ENCODE measurements at regions of chr2 and their contacts with region 1.

Region 1: DNA sequence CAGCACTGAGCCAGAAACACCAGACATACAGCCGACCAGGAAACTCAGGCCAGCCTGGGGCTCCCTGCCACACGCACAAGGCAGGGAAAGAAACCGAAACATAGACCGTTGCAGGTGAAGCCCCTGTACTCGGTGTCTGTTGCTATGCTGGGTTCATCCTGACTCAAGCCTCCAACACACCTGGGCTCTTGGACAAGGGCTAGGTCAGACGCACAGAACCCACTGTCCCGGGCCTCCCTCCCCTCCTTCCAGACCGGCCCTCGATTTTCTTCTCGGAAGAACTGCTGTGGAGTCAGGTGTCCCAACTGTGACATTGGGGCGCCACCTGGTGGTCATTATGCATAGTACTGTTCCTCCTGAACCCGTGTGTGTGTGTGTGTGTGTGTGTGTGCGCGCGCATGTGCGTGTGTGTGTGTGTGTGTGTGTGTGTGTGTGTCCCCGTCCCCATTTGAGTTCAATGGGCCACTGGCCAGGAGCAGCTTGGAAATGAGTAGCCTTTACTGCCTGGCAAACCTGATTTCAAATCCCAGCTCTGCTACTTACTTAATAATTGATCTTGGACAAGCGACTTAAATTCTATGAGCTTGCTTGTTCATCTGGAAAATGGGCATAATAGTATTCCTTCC is 55.4 kb upstream of the GLI2 start:
- DNase-seq: peak; percentile 75
- ATAC-seq: peak; percentile 70
- H3K4me3 ChIP-seq: peak overlapping the region in 1 of 5 experiments; percentile 33
- H3K4me3 Mint-ChIP-seq: no peak overlapping the region
- H3K27ac ChIP-seq: no peak overlapping the region
- H3K27ac Mint-ChIP-seq: no peak overlapping the region
- H3K4me1 ChIP-seq: peaks cover 3% of the 10 kb centered on the region in 2 donors
- H3K4me1 Mint-ChIP-seq: peaks cover 2% of the 10 kb centered on the region
- H3K27me3 ChIP-seq: peaks cover 0 to 12% (median 0%) of the 10 kb centered on the region in 4 experiments
- H3K27me3 Mint-ChIP-seq: peaks cover 53% of the 10 kb centered on the region
- CTCF ChIP-seq: peak; percentile 42

Region 2: GRCh38 chr2:119407430-119408220 is 1272.6 kb before region 1 on chr2:
- CTCF ChIA-PET with region 1: no interaction called
- POLR2A ChIA-PET with region 1: no interaction called
- intact Hi-C with region 1: loop called (anchors 5 kb)
- DNase-seq: peak; percentile 67
- ATAC-seq: peak; percentile 60
- H3K4me3 ChIP-seq: no peak overlapping the region
- H3K4me3 Mint-ChIP-seq: no peak overlapping the region
- H3K27ac ChIP-seq: no peak overlapping the region
- H3K27ac Mint-ChIP-seq: no peak overlapping the region
- H3K4me1 ChIP-seq: no peaks in the 10 kb centered on the region
- H3K4me1 Mint-ChIP-seq: no peaks in the 10 kb centered on the region
- H3K27me3 ChIP-seq: peaks cover 0 to 3% (median 0%) of the 10 kb centered on the region in 4 experiments
- H3K27me3 Mint-ChIP-seq: peaks cover 15% of the 10 kb centered on the region
- CTCF ChIP-seq: peak; percentile 81

Region 3: GRCh38 chr2:119641562-119642258 is 1038.5 kb before region 1 on chr2:
- CTCF ChIA-PET with region 1: interaction called, 10 read pairs
- POLR2A ChIA-PET with region 1: no interaction called
- intact Hi-C with region 1: loop called (anchors 2 kb)
- DNase-seq: peak; percentile 77
- ATAC-seq: peak; percentile 86
- H3K4me3 ChIP-seq: no peak overlapping the region
- H3K4me3 Mint-ChIP-seq: no peak overlapping the region
- H3K27ac ChIP-seq: no peak overlapping the region
- H3K27ac Mint-ChIP-seq: no peak overlapping the region
- H3K4me1 ChIP-seq: peaks cover 0 to 5% of the 10 kb centered on the region in 2 donors
- H3K4me1 Mint-ChIP-seq: peaks cover 6% of the 10 kb centered on the region
- H3K27me3 ChIP-seq: no peaks in the 10 kb centered on the region
- H3K27me3 Mint-ChIP-seq: peaks cover 25% of the 10 kb centered on the region
- CTCF ChIP-seq: peak; percentile 98

Region 4: GRCh38 chr2:119702918-119703401 is 977.3 kb before region 1 on chr2:
- CTCF ChIA-PET with region 1: interaction called, 25 read pairs
- POLR2A ChIA-PET with region 1: no interaction called
- intact Hi-C with region 1: no loop called
- DNase-seq: peak; percentile 70
- ATAC-seq: peak; percentile 97
- H3K4me3 ChIP-seq: no peak overlapping the region
- H3K4me3 Mint-ChIP-seq: no peak overlapping the region
- H3K27ac ChIP-seq: no peak overlapping the region
- H3K27ac Mint-ChIP-seq: no peak overlapping the region
- H3K4me1 ChIP-seq: peaks cover 0 to 5% of the 10 kb centered on the region in 2 donors
- H3K4me1 Mint-ChIP-seq: no peaks in the 10 kb centered on the region
- H3K27me3 ChIP-seq: peaks cover 0 to 10% (median 4%) of the 10 kb centered on the region in 4 experiments
- H3K27me3 Mint-ChIP-seq: peaks cover 3% of the 10 kb centered on the region
- CTCF ChIP-seq: peak; percentile 97

Region 5: GRCh38 chr2:120343433-120344105 is 336.7 kb before region 1 on chr2:
- CTCF ChIA-PET with region 1: interaction called, 10 read pairs
- POLR2A ChIA-PET with region 1: no interaction called
- intact Hi-C with region 1: no loop called
- DNase-seq: peak; percentile 68
- ATAC-seq: no peak
- H3K4me3 ChIP-seq: peak overlapping the region in 3 of 5 experiments; percentile 8 to 30 (median 12)
- H3K4me3 Mint-ChIP-seq: peak overlapping the region; percentile 50
- H3K27ac ChIP-seq: no peak overlapping the region
- H3K27ac Mint-ChIP-seq: no peak overlapping the region
- H3K4me1 ChIP-seq: peaks cover 26 to 34% of the 10 kb centered on the region in 2 donors
- H3K4me1 Mint-ChIP-seq: peaks cover 26% of the 10 kb centered on the region
- H3K27me3 ChIP-seq: peaks cover 0 to 72% (median 30%) of the 10 kb centered on the region in 4 experiments
- H3K27me3 Mint-ChIP-seq: peaks cover 47% of the 10 kb centered on the region
- CTCF ChIP-seq: peak; percentile 42

Region 6: GRCh38 chr2:120669121-120669952 is 10.9 kb before region 1 on chr2:
- CTCF ChIA-PET with region 1: interaction called, 10 read pairs
- POLR2A ChIA-PET with region 1: no interaction called
- intact Hi-C with region 1: no loop called
- DNase-seq: no peak
- ATAC-seq: no peak
- H3K4me3 ChIP-seq: no peak overlapping the region
- H3K4me3 Mint-ChIP-seq: no peak overlapping the region
- H3K27ac ChIP-seq: no peak overlapping the region
- H3K27ac Mint-ChIP-seq: no peak overlapping the region
- H3K4me1 ChIP-seq: no peaks in the 10 kb centered on the region
- H3K4me1 Mint-ChIP-seq: peaks cover 2% of the 10 kb centered on the region
- H3K27me3 ChIP-seq: peaks cover 0 to 13% (median 1%) of the 10 kb centered on the region in 4 experiments
- H3K27me3 Mint-ChIP-seq: peaks cover 26% of the 10 kb centered on the region
- CTCF ChIP-seq: no peak

Region 7: GRCh38 chr2:120691410-120691809 is 11.2 kb after region 1 on chr2:
- CTCF ChIA-PET with region 1: interaction called, 12 read pairs
- POLR2A ChIA-PET with region 1: no interaction called
- intact Hi-C with region 1: no loop called
- DNase-seq: no peak
- ATAC-seq: no peak
- H3K4me3 ChIP-seq: no peak overlapping the region
- H3K4me3 Mint-ChIP-seq: no peak overlapping the region
- H3K27ac ChIP-seq: no peak overlapping the region
- H3K27ac Mint-ChIP-seq: no peak overlapping the region
- H3K4me1 ChIP-seq: peaks cover 0 to 4% of the 10 kb centered on the region in 2 donors
- H3K4me1 Mint-ChIP-seq: peaks cover 2% of the 10 kb centered on the region
- H3K27me3 ChIP-seq: peaks cover 0 to 19% (median 8%) of the 10 kb centered on the region in 4 experiments
- H3K27me3 Mint-ChIP-seq: peaks cover 44% of the 10 kb centered on the region
- CTCF ChIP-seq: no peak

Region 8: DNA sequence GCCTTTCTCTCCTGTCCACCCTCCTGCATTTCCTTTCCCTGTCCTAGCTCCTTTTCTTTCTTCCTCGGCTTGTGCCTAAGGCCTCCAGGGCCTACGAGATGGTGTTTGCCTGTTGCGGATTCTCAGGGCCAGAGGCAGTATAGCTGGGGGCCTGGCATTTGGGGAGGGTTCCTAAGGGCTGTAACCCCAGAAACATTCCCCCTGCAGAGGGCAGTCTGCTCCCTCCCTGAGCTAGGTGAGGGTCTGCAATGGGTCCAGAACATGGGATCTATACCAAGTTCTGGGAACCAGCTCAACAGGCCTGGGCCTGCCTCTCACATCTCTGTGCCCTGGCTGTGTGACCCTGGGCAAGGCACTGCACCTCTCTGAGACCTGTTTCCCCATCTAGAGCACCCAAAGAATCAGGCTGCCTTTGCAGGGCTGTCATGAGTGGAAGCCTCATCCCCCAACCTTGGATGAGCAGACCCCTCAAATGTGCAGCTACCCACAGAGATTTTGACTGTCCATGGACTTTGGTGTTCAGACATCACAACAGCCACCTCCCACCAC is 153.0 kb after region 1 on chr2:
- CTCF ChIA-PET with region 1: no interaction called
- POLR2A ChIA-PET with region 1: no interaction called
- intact Hi-C with region 1: no loop called
- DNase-seq: no peak
- ATAC-seq: no peak
- H3K4me3 ChIP-seq: no peak overlapping the region
- H3K4me3 Mint-ChIP-seq: no peak overlapping the region
- H3K27ac ChIP-seq: no peak overlapping the region
- H3K27ac Mint-ChIP-seq: no peak overlapping the region
- H3K4me1 ChIP-seq: no peaks in the 10 kb centered on the region
- H3K4me1 Mint-ChIP-seq: no peaks in the 10 kb centered on the region
- H3K27me3 ChIP-seq: no peaks in the 10 kb centered on the region
- H3K27me3 Mint-ChIP-seq: no peaks in the 10 kb centered on the region
- CTCF ChIP-seq: no peak

Measured in B cell (primary cell).